Activated CD8-positive, alpha-beta T cell treated with anti-CD3 and anti-CD28 coated beads, Interleukin-2, amount 10 ng/mL, durations not matched to agents 7 days and 5 days (primary cell): ENCODE measurements at regions of chr22 and their contacts with region 1.

Region 1: DNA sequence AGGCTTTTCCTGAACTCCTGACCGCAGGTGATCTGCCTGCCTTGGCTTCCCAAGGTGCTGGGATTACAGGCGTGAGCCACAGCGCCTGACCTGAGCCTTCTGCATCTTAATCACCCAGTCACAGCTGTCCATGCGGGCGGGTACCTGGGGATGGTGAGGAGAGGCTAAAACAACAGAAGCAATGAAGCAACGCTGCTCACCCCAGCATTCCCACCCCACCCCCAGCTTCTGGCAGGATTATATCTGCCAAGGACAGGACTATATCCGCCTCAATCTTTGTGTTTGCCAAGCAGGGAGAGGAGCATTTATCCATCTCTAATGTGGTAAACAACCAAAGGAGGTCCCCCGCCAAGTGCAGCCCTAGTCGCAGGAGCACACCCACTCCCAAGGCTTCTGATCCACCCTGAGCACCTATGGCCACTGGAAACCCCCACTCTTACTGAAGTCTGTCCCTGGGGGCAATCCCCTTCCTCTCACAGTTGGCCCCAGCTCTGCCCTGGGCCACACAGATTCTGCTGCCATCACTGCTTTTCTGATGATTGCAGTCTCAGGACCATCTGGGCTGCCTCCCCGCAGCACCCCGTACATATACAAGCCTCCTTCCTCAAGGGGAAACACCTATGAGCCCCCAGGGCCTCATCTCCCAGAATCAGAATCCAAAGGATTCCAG is 8.8 kb upstream of the LGALS2 start:
- DNase-seq: no peak
- ATAC-seq: no peak
- H3K4me3 Mint-ChIP-seq: no peak overlapping the region
- H3K27ac Mint-ChIP-seq: no peak overlapping the region
- H3K4me1 Mint-ChIP-seq: peaks cover 11% of the 10 kb centered on the region
- H3K27me3 Mint-ChIP-seq: peaks cover 12% of the 10 kb centered on the region

Region 2: GRCh38 chr22:37538590-37539357 is 49.9 kb before region 1 on chr22:
- CTCF ChIA-PET with region 1: interaction called, 104 read pairs
- POLR2A ChIA-PET with region 1: interaction called, 5 read pairs
- DNase-seq: peak; percentile 95
- ATAC-seq: peak; percentile 99
- H3K4me3 Mint-ChIP-seq: peak overlapping the region; percentile 3
- H3K27ac Mint-ChIP-seq: peak overlapping the region; percentile 20
- H3K4me1 Mint-ChIP-seq: peaks cover 52% of the 10 kb centered on the region
- H3K27me3 Mint-ChIP-seq: peaks cover 20% of the 10 kb centered on the region

Region 3: GRCh38 chr22:37544955-37545699 is 43.6 kb before region 1 on chr22:
- CTCF ChIA-PET with region 1: interaction called, 104 read pairs
- POLR2A ChIA-PET with region 1: interaction called, 5 read pairs
- DNase-seq: peak; percentile 71
- ATAC-seq: peak; percentile 74
- H3K4me3 Mint-ChIP-seq: no peak overlapping the region
- H3K27ac Mint-ChIP-seq: no peak overlapping the region
- H3K4me1 Mint-ChIP-seq: peaks cover 33% of the 10 kb centered on the region
- H3K27me3 Mint-ChIP-seq: peaks cover 13% of the 10 kb centered on the region

Region 4: DNA sequence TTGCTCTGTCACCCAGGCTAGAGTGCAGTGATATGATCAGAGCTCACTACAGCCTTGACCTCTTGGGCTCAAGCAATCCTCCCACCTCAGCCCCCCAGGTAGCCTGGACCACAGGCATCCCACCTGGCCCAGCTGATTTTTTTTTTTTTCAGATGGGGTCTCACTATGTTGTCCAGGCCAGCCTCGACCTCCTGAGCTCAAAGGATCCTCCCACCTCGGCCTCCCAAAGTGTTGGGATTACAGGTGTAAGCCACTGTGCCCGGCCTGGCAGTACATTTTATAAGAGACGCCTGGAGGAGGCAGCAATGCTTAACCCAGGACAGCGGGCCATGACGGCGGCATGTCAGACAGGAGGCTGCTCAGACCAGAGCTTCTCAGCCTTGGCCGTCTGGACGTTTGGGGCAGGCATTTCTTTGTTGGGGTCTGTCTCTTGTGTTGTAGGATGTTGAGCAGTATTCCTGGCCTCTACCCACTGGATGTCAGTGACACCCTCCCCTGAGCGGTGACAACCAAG is 13.1 kb before region 1 on chr22:
- CTCF ChIA-PET with region 1: interaction called, 45 read pairs
- POLR2A ChIA-PET with region 1: no interaction called
- DNase-seq: no peak
- ATAC-seq: no peak
- H3K4me3 Mint-ChIP-seq: no peak overlapping the region
- H3K27ac Mint-ChIP-seq: no peak overlapping the region
- H3K4me1 Mint-ChIP-seq: peaks cover 9% of the 10 kb centered on the region
- H3K27me3 Mint-ChIP-seq: peaks cover 12% of the 10 kb centered on the region

Region 5: DNA sequence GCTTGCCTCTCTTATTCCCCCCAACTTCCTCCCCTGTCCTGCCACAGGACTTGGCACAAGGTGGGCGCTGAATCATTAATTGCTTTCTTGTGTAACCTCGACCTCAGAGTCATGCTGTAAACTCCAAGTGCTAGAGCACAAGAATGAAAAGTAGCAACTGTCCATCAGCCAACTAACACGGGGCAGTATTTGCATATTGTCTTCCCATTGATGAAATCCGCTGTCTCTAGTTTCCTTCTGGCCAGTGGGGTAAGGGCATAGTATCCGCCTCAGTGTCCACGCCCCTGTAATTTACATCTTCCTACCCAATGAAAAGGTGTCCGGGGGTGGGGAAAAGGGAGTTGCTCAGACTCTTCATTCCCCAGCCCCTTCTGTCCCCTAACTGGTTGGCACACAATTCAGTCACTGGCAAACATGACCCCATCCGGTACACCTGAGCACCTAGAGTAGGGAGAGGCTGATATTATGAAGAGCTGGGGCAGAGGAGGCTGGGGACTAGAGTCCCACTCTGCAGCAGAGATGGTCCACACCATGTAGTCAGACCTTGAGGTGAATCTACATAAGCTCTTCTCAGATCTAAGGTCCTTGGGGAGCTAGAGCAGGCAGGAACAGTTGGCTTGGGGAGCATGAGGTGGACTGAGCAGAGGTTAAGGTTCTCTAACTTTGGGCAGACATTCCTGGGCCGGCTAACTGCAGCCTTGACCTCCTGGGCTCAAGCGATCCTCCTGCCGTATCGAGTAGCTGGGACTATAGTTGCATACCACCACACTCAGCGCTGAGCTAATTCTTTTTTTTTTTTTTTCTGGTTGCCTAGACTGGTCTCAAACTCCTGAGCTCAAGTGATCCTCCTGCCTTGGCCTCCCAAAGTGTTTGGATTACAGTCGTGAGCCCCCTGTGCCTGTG is 13.1 kb after region 1 on chr22:
- CTCF ChIA-PET with region 1: interaction called, 126 read pairs
- POLR2A ChIA-PET with region 1: interaction called, 5 read pairs
- DNase-seq: no peak
- ATAC-seq: no peak
- H3K4me3 Mint-ChIP-seq: no peak overlapping the region
- H3K27ac Mint-ChIP-seq: no peak overlapping the region
- H3K4me1 Mint-ChIP-seq: peaks cover 30% of the 10 kb centered on the region
- H3K27me3 Mint-ChIP-seq: peaks cover 20% of the 10 kb centered on the region

Region 6: DNA sequence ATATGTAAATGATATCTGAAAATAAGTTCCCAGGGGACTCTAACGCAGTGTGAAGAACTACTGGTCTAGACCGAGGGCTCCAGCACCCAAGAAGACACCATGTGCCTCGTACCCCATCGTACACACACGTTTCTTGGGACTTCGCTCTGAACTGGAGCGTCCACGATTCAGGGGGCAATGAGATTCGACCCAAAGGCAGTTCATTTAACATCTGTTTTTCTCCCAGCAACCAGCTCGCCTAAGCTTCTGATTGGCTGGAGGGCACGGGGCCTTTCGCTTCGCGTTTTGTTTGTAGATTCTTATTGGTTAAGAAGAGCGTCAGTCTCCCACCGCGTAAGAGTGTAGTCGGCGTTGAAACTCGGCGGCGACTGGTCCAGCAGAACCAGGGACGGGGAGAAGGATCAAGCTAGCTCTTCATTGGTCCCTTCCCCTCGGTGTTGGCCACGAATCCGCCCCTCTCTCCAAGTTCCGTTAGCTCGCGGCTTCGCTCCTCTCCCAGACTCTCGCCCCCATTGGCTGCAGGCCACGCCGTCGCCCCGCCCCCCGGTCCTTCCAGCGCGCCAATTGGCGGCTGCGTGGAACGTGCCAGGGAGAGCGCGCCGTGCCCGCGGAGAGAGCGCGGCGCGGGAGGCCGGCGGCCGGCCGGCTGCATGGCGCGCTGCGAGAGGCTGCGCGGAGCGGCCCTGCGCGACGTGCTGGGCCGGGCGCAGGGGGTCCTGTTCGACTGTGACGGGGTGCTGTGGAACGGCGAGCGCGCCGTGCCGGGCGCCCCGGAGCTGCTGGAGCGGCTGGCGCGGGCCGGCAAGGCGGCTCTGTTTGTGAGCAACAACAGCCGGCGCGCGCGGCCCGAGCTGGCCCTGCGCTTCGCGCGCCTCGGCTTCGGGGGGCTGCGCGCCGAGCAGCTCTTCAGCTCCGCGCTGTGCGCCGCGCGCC is 69.7 kb after region 1 on chr22 and contains the start of gene PDXP:
- CTCF ChIA-PET with region 1: interaction called, 10 read pairs
- POLR2A ChIA-PET with region 1: no interaction called
- DNase-seq: peak; percentile 99
- ATAC-seq: peak; percentile 98
- H3K4me3 Mint-ChIP-seq: peak within 1 kb of the TSS; percentile 87
- H3K27ac Mint-ChIP-seq: peak within 1 kb of the TSS; percentile 87
- H3K4me1 Mint-ChIP-seq: peaks cover 37% of the 10 kb centered on the region
- H3K27me3 Mint-ChIP-seq: no peaks in the 10 kb centered on the region
- total RNA-seq, gene PDXP: 31.5 to 33.5 TPM

Region 7: GRCh38 chr22:37708580-37709444 is 120.1 kb after region 1 on chr22:
- CTCF ChIA-PET with region 1: no interaction called
- POLR2A ChIA-PET with region 1: no interaction called
- DNase-seq: no peak
- ATAC-seq: no peak
- H3K4me3 Mint-ChIP-seq: no peak overlapping the region
- H3K27ac Mint-ChIP-seq: no peak overlapping the region
- H3K4me1 Mint-ChIP-seq: no peaks in the 10 kb centered on the region
- H3K27me3 Mint-ChIP-seq: no peaks in the 10 kb centered on the region